H1 (cell line): ENCODE measurements at regions of chrX and their contacts with region 1.

Region 1: DNA sequence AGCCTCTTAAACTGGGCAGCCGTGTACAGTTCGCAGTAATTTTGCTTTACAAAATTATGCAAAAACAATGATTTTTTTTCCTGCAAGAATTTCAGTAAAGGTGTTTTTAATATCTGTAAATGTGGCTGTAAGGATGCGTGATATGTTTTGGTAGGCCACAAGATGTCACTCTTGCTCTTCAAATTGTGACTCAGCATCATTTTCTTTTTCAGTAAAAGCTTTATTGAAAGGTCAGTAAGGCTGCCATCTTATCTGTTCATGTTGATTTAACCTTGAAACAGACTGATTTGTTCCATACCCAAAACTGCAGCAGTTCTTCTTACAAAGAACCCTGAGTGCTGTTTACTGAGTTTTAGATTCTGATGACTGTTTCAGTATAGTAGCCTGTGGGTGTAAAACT is 39.9 kb downstream of the TXLNG start:
- DNase-seq: no peak
- H3K4me3 ChIP-seq: no peak overlapping the region
- H3K27ac ChIP-seq: no peak overlapping the region
- H3K4me1 ChIP-seq: peaks cover 0 to 2% (median 0%) of the 10 kb centered on the region in 4 experiments; a peak in 1 of 7 replicates
- H3K27me3 ChIP-seq: no peaks in the 10 kb centered on the region
- CTCF ChIP-seq: peak in 1 of 3 experiments; percentile 28; a peak in 2 of 4 replicates
- EP300 ChIP-seq: no peak
- POLR2A ChIP-seq: no peak
- RAD21 ChIP-seq: peak; percentile 29 to 48; a peak in 3 of 4 replicates

Region 2: GRCh38 chrX:16838202-16839066 is 12.2 kb after region 1 on chrX:
- CTCF ChIA-PET with region 1: interaction called, 19 read pairs
- POLR2A ChIA-PET with region 1: interaction called, 4 read pairs
- DNase-seq: no peak
- H3K4me3 ChIP-seq: no peak overlapping the region
- H3K27ac ChIP-seq: no peak overlapping the region
- H3K4me1 ChIP-seq: peaks cover 0 to 6% (median 5%) of the 10 kb centered on the region in 4 experiments; a peak in 3 of 7 replicates
- H3K27me3 ChIP-seq: no peaks in the 10 kb centered on the region
- CTCF ChIP-seq: peak in 1 of 3 experiments; percentile 3; a peak in 1 of 4 replicates
- EP300 ChIP-seq: no peak
- POLR2A ChIP-seq: no peak
- RAD21 ChIP-seq: no peak